ENCODE measurements at regions of chr1 and their contacts with region 1.

Region 1: GRCh38 chr1:51906306-51907078 is 28.0 kb upstream of the NRDC start:
- DNase-seq: no peak
- ATAC-seq: no peak
- H3K4me3 ChIP-seq: no peak overlapping the region
- H3K27ac ChIP-seq: no peak overlapping the region
- H3K4me1 ChIP-seq: no peaks in the 10 kb centered on the region
- H3K27me3 ChIP-seq: peaks cover 0 to 35% (median 7%) of the 10 kb centered on the region in 9 donors
- CTCF ChIP-seq: no peak
- POLR2A ChIP-seq: no peak

Region 2: GRCh38 chr1:51861669-51862068 is 44.8 kb before region 1 on chr1:
- intact Hi-C with region 1: loop called in 1 of 10 experiments (anchors 2 kb)
- DNase-seq: no peak
- ATAC-seq: no peak
- H3K4me3 ChIP-seq: no peak overlapping the region
- H3K27ac ChIP-seq: no peak overlapping the region
- H3K4me1 ChIP-seq: peaks cover 0 to 19% (median 7%) of the 10 kb centered on the region in 12 donors
- H3K27me3 ChIP-seq: no peaks in the 10 kb centered on the region
- CTCF ChIP-seq: no peak
- POLR2A ChIP-seq: no peak

Region 3: DNA sequence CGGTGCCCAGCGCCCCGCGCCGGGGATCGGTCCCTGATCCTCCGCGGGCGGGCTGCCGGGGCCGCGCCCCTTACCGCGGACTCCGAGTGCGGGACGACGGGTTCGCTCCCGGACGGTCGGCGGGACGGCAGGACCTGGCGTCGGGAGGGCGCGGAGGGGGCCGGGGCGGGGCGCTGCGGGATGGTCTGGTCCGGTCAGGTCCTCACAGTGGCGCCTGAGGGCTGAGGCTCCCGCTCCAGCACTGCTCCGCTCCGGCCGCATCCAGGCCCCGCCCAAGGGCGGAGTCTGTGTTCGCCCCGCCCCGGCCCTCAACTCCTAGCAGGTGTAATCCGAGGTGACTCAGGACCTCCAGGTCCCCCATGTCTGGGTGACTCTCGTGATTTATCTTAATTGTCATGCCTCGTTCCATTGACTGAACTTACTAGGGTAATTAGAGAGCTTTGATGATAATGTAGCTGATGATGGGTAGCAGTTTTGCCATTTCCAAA is 84.0 kb after region 1 on chr1 and contains the start of gene RAB3B:
- intact Hi-C with region 1: loop called in 1 of 10 experiments (anchors 5 kb)
- DNase-seq: peak in 4 of 5 donors; percentile 11 to 73 (median 25)
- ATAC-seq: peak in 3 of 4 donors; percentile 60 to 85 (median 74)
- H3K4me3 ChIP-seq: peak within 1 kb of the TSS in 11 of 12 donors; percentile 19 to 56 (median 40)
- H3K27ac ChIP-seq: no peak within 1 kb of the TSS
- H3K4me1 ChIP-seq: peaks cover 0 to 10% (median 0%) of the 10 kb centered on the region in 12 donors
- H3K27me3 ChIP-seq: peaks cover 16 to 60% (median 36%) of the 10 kb centered on the region in 9 donors
- CTCF ChIP-seq: no peak
- POLR2A ChIP-seq: no peak
- total RNA-seq, gene RAB3B: 0.02 to 0.11 TPM in 2 of 9 donors, not detected in the others

Region 4: GRCh38 chr1:52111492-52111891 is 205.0 kb after region 1 on chr1:
- intact Hi-C with region 1: no loop called
- DNase-seq: no peak
- ATAC-seq: no peak
- H3K4me3 ChIP-seq: no peak overlapping the region
- H3K27ac ChIP-seq: no peak overlapping the region
- H3K4me1 ChIP-seq: no peaks in the 10 kb centered on the region
- H3K27me3 ChIP-seq: no peaks in the 10 kb centered on the region
- CTCF ChIP-seq: no peak
- POLR2A ChIP-seq: no peak